ENCODE measurements at regions of chr4 and their contacts with region 1.

Region 1: GRCh38 chr4:145216535-145216934 is 36.1 kb upstream of the OTUD4 start:
- DNase-seq: no peak
- ATAC-seq: 0 out of 3 replicates have a peak, but pooled peaks have one; percentile 46
- H3K4me3 ChIP-seq: no peak overlapping the region
- H3K27ac ChIP-seq: no peak overlapping the region
- H3K4me1 ChIP-seq: peaks cover 3% of the 10 kb centered on the region; the same call in 1 of the 2 replicates
- H3K27me3 ChIP-seq: no peaks in the 10 kb centered on the region
- CTCF ChIP-seq: peak; percentile 45 to 59 (median 50); a peak in 5 of 6 replicates
- EP300 ChIP-seq: no peak
- POLR2A ChIP-seq: no peak
- RAD21 ChIP-seq: peak; percentile 88

Region 2: DNA sequence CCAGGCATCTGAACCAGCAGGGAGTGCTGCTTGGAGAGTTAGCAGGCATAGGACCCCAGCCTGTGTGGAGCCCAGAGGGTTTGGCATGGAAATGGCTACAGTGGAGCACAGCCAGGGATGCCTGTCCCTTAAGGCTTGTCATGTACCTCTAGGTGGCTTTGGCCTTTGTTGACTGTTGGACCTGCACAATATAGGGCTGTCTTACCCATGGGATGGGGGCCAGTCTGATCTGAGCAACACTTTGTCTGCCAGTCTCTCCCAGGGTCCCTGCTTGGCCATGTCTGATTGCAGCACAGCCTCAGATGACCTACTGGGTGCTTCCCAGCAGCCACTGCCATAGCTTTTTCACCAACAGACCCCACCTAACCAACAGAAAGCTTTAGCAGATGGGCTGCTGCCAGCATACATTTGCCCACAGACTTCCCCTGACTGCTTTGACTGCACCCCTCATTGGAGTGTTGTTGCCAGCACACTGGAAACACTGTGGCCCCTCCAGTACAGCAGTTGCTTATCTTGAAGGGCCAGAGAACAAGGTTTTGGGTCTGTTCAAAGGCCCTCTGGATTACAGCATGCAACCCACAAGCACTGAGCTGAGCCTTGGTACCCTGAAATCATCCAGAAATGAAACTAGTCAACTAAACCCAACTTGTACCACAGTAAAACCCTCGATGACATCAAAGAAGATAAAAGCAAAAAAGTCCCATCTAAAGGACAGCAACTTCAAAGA is 140.6 kb before region 1 on chr4:
- CTCF ChIA-PET with region 1: no interaction called
- POLR2A ChIA-PET with region 1: no interaction called
- RAD21 ChIA-PET with region 1: no interaction called
- SMC1A ChIA-PET with region 1: no interaction called
- in situ Hi-C with region 1: no loop called
- intact Hi-C with region 1: no loop called
- DNase-seq: no peak
- ATAC-seq: peak; percentile 84
- H3K4me3 ChIP-seq: no peak overlapping the region
- H3K27ac ChIP-seq: no peak overlapping the region
- H3K4me1 ChIP-seq: no peaks in the 10 kb centered on the region; the same call in 1 of the 2 replicates
- H3K27me3 ChIP-seq: no peaks in the 10 kb centered on the region
- CTCF ChIP-seq: no peak
- EP300 ChIP-seq: no peak
- POLR2A ChIP-seq: no peak
- RAD21 ChIP-seq: no peak

Region 3: GRCh38 chr4:145154573-145154972 is 62.0 kb before region 1 on chr4:
- CTCF ChIA-PET with region 1: interaction called, 7 read pairs
- POLR2A ChIA-PET with region 1: no interaction called
- RAD21 ChIA-PET with region 1: interaction called, 4 read pairs
- SMC1A ChIA-PET with region 1: interaction called, 10 read pairs
- in situ Hi-C with region 1: no loop called
- intact Hi-C with region 1: loop called (anchors 1 kb)
- DNase-seq: no peak
- ATAC-seq: peak; percentile 94
- H3K4me3 ChIP-seq: no peak overlapping the region
- H3K27ac ChIP-seq: peak overlapping the region; percentile 42; the same call in 1 of the 2 replicates
- H3K4me1 ChIP-seq: peaks cover 7% of the 10 kb centered on the region; the same call in 1 of the 2 replicates
- H3K27me3 ChIP-seq: no peaks in the 10 kb centered on the region
- CTCF ChIP-seq: peak; percentile 59 to 77 (median 70)
- EP300 ChIP-seq: no peak
- POLR2A ChIP-seq: no peak
- RAD21 ChIP-seq: peak; percentile 88

Region 4: DNA sequence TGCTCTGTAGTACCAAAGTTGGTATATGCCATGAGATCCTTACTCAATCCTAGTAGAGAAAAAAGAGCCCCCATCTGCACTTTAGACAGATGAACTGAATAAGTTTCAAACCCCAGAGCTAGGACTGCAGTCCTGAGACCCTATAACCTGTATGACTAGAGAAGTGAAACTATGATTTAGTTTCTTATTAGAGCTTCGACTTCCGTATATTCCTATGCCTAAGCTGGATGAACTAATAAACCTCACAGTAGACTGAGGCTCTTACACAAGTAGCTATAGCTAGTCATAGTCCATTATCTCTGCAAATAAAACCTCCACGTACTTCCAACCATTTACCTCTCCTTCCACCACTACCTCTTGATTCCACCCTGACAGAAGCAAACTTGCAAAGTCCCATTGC is 29.8 kb before region 1 on chr4:
- CTCF ChIA-PET with region 1: interaction called, 17 read pairs
- POLR2A ChIA-PET with region 1: no interaction called
- RAD21 ChIA-PET with region 1: interaction called, 6 read pairs
- SMC1A ChIA-PET with region 1: interaction called, 5 read pairs
- in situ Hi-C with region 1: no loop called
- intact Hi-C with region 1: no loop called
- DNase-seq: no peak
- ATAC-seq: peak; percentile 88
- H3K4me3 ChIP-seq: no peak overlapping the region
- H3K27ac ChIP-seq: no peak overlapping the region
- H3K4me1 ChIP-seq: peaks cover 35% of the 10 kb centered on the region
- H3K27me3 ChIP-seq: no peaks in the 10 kb centered on the region
- CTCF ChIP-seq: no peak
- EP300 ChIP-seq: no peak
- POLR2A ChIP-seq: no peak
- RAD21 ChIP-seq: no peak

Region 5: GRCh38 chr4:145557720-145558119 is 341.2 kb after region 1 on chr4:
- CTCF ChIA-PET with region 1: interaction called, 61 read pairs
- POLR2A ChIA-PET with region 1: no interaction called
- RAD21 ChIA-PET with region 1: interaction called, 22 read pairs
- SMC1A ChIA-PET with region 1: interaction called, 35 read pairs
- in situ Hi-C with region 1: no loop called
- intact Hi-C with region 1: loop called (anchors 1 kb)
- DNase-seq: peak; percentile 20
- ATAC-seq: peak; percentile 98
- H3K4me3 ChIP-seq: no peak overlapping the region
- H3K27ac ChIP-seq: no peak overlapping the region
- H3K4me1 ChIP-seq: peaks cover 2% of the 10 kb centered on the region; the same call in 1 of the 2 replicates
- H3K27me3 ChIP-seq: no peaks in the 10 kb centered on the region
- CTCF ChIP-seq: peak; percentile 92 to 96 (median 96)
- EP300 ChIP-seq: no peak
- POLR2A ChIP-seq: no peak
- RAD21 ChIP-seq: peak; percentile 95

Region 6: DNA sequence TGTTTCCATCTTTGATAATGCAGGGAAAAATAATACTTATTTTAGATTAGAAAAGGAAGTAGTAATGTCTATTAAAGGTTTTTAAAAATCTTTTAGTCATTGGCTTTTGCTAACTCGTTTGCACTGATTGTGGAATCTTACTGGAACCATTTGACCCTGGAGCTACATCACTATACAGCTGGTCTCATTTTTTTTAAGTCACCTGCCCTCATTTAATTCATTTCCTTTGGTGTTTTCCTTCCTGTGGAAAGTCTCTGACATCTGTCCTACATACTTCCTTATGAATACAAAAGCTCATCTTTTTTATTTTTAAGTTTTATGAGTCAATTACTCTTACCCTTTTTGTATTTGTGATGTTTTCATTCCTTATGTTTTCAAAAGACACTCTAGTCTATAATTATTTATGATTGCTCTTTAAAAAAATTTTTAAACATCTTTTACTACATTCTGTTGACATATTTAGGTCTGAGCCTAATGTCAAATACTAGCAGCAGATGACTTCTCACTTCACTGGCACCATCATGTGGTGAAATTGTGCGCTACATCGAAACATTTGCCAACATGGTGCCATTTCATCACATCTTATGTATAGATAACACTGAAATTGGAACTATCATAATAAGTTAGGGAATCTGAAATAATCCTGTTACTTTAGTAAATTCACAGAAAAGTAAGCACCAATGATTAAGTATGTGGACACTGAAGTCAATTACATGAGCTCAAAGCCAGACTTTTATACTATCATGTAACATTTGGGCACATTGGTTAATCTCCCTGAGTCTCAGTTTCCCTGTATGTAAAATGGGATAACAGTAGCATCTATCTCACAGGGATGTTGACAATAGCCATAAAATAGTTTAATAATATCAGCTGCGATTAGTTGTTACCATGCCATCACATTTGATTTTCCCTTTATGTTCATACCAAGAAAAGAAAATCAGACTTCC is 393.2 kb after region 1 on chr4:
- CTCF ChIA-PET with region 1: interaction called, 55 read pairs
- POLR2A ChIA-PET with region 1: no interaction called
- RAD21 ChIA-PET with region 1: interaction called, 6 read pairs
- SMC1A ChIA-PET with region 1: interaction called, 14 read pairs
- in situ Hi-C with region 1: no loop called
- intact Hi-C with region 1: no loop called
- DNase-seq: peak; percentile 58
- ATAC-seq: peak; percentile 90
- H3K4me3 ChIP-seq: no peak overlapping the region
- H3K27ac ChIP-seq: no peak overlapping the region
- H3K4me1 ChIP-seq: no peaks in the 10 kb centered on the region
- H3K27me3 ChIP-seq: no peaks in the 10 kb centered on the region
- CTCF ChIP-seq: peak; percentile 72 to 83 (median 82)
- EP300 ChIP-seq: no peak
- POLR2A ChIP-seq: no peak
- RAD21 ChIP-seq: peak; percentile 97

Measured in GM12878 (cell line).